Activated CD4-positive, alpha-beta T cell treated with anti-CD3 and anti-CD28 coated beads for 36 hours (primary cell): ENCODE measurements at regions of chr1 and their contacts with region 1.

Region 1: DNA sequence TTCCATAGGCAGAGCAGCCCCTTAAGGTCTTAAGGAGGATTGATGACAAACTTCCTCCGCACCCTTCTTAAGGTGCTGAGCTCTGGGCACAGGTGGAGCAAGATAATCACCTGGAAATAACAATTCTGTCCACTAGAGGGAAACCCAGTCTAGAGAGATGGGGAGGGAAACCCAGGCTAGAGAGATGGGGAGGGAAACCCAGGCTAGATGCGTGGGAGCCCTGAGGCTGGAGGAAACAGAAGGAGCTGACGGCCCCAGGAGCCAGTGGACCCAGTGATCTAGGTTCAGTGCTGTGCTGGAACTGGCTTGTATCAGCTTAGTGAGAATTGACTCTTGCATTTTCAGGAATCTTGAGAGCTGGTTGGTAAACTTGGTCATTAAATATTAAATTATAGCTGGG is 17.8 kb upstream of the MYCL start:
- DNase-seq: peak; percentile 74
- ATAC-seq: peak; percentile 98
- H3K4me3 Mint-ChIP-seq: no peak overlapping the region
- H3K27ac Mint-ChIP-seq: no peak overlapping the region
- H3K4me1 Mint-ChIP-seq: no peaks in the 10 kb centered on the region
- H3K27me3 Mint-ChIP-seq: peaks cover 2% of the 10 kb centered on the region

Region 2: GRCh38 chr1:39671793-39672550 is 247.6 kb before region 1 on chr1 and contains the start of gene NT5C1A:
- CTCF ChIA-PET with region 1: no interaction called
- POLR2A ChIA-PET with region 1: no interaction called
- intact Hi-C with region 1: no loop called
- DNase-seq: peak; percentile 58
- ATAC-seq: peak; percentile 48
- H3K4me3 Mint-ChIP-seq: peak within 1 kb of the TSS; percentile 31
- H3K27ac Mint-ChIP-seq: no peak within 1 kb of the TSS
- H3K4me1 Mint-ChIP-seq: peaks cover 13% of the 10 kb centered on the region
- H3K27me3 Mint-ChIP-seq: peaks cover 28% of the 10 kb centered on the region
- total RNA-seq, gene NT5C1A: 0.21 TPM in 1 of 2 experiments, not detected in the other

Region 3: DNA sequence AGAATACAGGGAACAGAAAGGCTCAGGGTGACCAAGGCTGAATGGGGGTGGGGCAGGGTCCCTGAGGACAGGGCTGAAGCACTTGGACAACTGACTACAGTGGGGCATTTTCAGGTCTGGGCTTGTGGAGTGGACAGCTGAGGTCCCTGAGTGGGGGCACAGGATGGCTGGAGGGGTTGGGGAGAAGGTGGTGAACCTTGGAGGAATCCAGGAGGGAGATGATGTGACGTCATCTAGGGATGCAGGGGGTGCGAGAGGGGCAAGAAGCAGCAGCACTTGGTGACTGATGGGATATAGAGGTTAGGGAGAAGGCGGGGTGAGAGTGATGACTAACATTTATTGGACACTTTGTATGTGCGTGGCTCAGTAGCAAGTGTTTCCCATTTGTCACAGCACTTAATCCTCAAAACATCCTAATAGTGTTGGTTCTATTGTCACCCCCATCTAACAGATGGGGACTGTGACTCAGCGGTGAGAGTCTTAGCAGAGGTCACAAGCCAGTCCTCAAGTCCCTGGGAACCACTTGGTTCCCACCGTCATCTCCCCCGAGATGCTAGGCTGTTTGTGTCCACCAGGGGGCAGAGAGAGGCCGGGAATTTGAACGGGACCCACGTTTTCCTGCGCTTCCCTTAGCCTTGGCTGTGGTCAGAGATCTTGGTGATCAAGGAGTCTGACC is 103.0 kb before region 1 on chr1:
- CTCF ChIA-PET with region 1: interaction called, 16 read pairs
- POLR2A ChIA-PET with region 1: no interaction called
- intact Hi-C with region 1: loop called in 1 of 2 experiments (anchors 1 kb)
- DNase-seq: peak; percentile 81
- ATAC-seq: peak; percentile 76
- H3K4me3 Mint-ChIP-seq: peak overlapping the region; percentile 9
- H3K27ac Mint-ChIP-seq: peak overlapping the region; percentile 49
- H3K4me1 Mint-ChIP-seq: peaks cover 13% of the 10 kb centered on the region
- H3K27me3 Mint-ChIP-seq: peaks cover 4% of the 10 kb centered on the region

Region 4: GRCh38 chr1:39901698-39902459 is 17.7 kb before region 1 on chr1 and contains the start of gene MYCL:
- CTCF ChIA-PET with region 1: interaction called, 15 read pairs
- POLR2A ChIA-PET with region 1: no interaction called
- intact Hi-C with region 1: no loop called
- DNase-seq: peak; percentile 86
- ATAC-seq: peak; percentile 92
- H3K4me3 Mint-ChIP-seq: peak within 1 kb of the TSS; percentile 66
- H3K27ac Mint-ChIP-seq: no peak within 1 kb of the TSS
- H3K4me1 Mint-ChIP-seq: peaks cover 2% of the 10 kb centered on the region
- H3K27me3 Mint-ChIP-seq: peaks cover 51% of the 10 kb centered on the region
- total RNA-seq, gene MYCL: 0.11 to 0.16 TPM

Region 5: DNA sequence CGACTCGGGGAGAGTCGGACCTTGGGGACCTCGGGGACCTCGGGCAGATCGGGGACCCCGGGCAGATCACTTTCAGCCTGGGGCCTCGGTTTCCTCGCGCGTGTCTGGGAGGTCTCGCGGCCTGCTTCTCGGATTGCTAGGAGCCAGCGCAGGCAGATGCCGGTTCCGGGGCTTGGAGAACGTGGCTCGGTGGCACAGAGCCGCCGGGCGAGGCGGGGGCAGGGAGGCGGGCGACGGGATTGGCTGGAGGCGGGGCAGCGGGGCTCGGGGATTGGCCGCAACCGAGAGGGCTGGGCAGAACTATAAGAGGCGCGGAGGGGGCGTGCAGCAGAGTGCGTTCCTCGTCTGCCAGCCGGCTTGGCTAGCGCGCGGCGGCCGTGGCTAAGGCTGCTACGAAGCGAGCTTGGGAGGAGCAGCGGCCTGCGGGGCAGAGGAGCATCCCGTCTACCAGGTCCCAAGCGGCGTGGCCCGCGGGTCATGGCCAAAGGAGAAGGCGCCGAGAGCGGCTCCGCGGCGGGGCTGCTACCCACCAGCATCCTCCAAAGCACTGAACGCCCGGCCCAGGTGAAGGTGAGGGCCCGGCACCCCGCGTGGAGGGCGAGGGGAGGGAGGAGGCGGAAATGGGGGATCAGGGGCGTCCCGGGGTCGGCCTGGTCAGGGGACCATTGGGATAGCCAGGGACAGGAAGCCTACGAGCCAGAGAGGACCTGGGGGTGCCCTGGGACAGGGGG is 35.4 kb after region 1 on chr1 and contains the start of gene MFSD2A:
- CTCF ChIA-PET with region 1: interaction called, 10 read pairs
- POLR2A ChIA-PET with region 1: no interaction called
- intact Hi-C with region 1: loop called (anchors 1 to 5 kb)
- DNase-seq: peak; percentile 96
- ATAC-seq: peak; percentile 94
- H3K4me3 Mint-ChIP-seq: peak within 1 kb of the TSS; percentile 88
- H3K27ac Mint-ChIP-seq: peak within 1 kb of the TSS; percentile 82
- H3K4me1 Mint-ChIP-seq: peaks cover 32% of the 10 kb centered on the region
- H3K27me3 Mint-ChIP-seq: no peaks in the 10 kb centered on the region
- total RNA-seq, gene MFSD2A: 8.8 to 12.8 TPM

Region 6: GRCh38 chr1:40032240-40032891 is 112.8 kb after region 1 on chr1:
- CTCF ChIA-PET with region 1: interaction called, 27 read pairs
- POLR2A ChIA-PET with region 1: no interaction called
- intact Hi-C with region 1: loop called (anchors 1 to 2 kb)
- DNase-seq: peak; percentile 65
- ATAC-seq: peak; percentile 66
- H3K4me3 Mint-ChIP-seq: no peak overlapping the region
- H3K27ac Mint-ChIP-seq: no peak overlapping the region
- H3K4me1 Mint-ChIP-seq: peaks cover 33% of the 10 kb centered on the region
- H3K27me3 Mint-ChIP-seq: no peaks in the 10 kb centered on the region

Region 7: DNA sequence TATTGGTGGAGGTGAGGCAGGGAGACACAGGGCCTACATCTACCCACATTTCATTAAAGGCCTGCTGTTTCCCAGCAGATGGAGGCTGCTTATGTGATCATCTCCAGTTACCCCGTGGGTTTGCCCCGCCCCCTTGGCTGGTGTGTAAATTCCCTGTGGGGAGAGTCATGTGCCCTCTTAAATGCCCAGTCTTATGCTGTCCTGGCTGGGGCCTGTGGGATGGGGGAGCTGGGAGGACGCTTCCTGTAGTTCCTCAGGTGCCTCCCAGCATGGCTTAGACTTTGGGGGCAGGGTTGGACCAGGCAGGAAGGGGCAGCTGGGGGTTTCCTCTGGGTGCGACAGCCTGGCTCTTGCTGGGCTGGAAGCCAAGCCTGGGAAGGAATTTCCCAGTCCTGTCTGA is 958.2 kb after region 1 on chr1:
- CTCF ChIA-PET with region 1: no interaction called
- POLR2A ChIA-PET with region 1: no interaction called
- intact Hi-C with region 1: no loop called
- DNase-seq: peak; percentile 42
- ATAC-seq: no peak
- H3K4me3 Mint-ChIP-seq: no peak overlapping the region
- H3K27ac Mint-ChIP-seq: no peak overlapping the region
- H3K4me1 Mint-ChIP-seq: peaks cover 28% of the 10 kb centered on the region
- H3K27me3 Mint-ChIP-seq: peaks cover 2% of the 10 kb centered on the region